WTC11 (cell line): ENCODE measurements at regions of chr18 and their contacts with region 1.

Region 1: GRCh38 chr18:961644-962355 is 57.1 kb downstream of the ADCYAP1 start:
- DNase-seq: peak; percentile 66
- ATAC-seq: peak; percentile 62
- H3K4me3 Mint-ChIP-seq: peak overlapping the region; percentile 46
- H3K27ac Mint-ChIP-seq: no peak overlapping the region
- H3K4me1 Mint-ChIP-seq: peaks cover 5% of the 10 kb centered on the region
- H3K27me3 Mint-ChIP-seq: no peaks in the 10 kb centered on the region; the same call in 1 of the 2 replicates
- CTCF ChIP-seq: peak; percentile 94

Region 2: DNA sequence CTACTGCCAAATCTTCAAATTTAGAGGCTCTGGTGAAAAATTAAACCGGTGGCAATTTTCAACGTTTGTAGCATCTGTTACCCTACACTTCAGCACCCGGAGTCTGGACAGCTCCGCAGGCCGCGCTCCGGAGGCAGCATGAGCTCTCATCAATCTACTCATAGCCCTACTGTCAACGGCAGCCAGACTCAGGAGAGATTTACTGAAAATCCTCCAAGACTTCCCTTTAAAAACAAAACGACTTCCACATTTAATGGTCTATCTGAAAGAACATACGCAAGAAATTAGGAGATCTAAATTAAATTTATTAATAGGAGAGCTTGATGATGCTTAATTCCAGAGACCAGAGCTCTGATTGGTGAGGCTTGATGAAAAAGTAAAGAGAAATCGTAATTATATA is 58.1 kb before region 1 on chr18:
- CTCF ChIA-PET with region 1: interaction called, 26 read pairs
- POLR2A ChIA-PET with region 1: no interaction called
- DNase-seq: peak; percentile 83
- ATAC-seq: no peak
- H3K4me3 Mint-ChIP-seq: peak overlapping the region; percentile 76
- H3K27ac Mint-ChIP-seq: no peak overlapping the region
- H3K4me1 Mint-ChIP-seq: peaks cover 50% of the 10 kb centered on the region
- H3K27me3 Mint-ChIP-seq: peaks cover 89% of the 10 kb centered on the region
- CTCF ChIP-seq: no peak

Region 3: DNA sequence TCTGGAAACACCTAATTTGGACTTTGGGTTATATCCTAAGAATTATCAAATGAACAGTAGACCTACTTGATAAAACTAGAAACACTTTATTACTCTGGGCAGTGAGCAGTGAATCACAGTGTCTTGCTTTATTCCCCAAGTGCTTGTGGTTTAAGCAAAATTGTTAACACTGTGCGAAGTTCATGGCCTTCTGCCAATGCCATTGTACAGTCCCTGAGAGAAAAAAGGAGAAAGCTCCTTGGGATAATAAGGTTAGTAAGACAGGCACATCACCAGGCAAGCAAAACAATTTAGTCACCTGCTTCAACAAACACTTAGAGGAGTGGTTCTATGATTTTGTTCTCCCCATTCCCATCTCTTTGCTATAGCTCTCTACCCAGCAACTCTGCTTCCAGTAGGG is 17.4 kb before region 1 on chr18:
- CTCF ChIA-PET with region 1: interaction called, 17 read pairs
- POLR2A ChIA-PET with region 1: no interaction called
- DNase-seq: no peak
- ATAC-seq: no peak
- H3K4me3 Mint-ChIP-seq: no peak overlapping the region
- H3K27ac Mint-ChIP-seq: no peak overlapping the region
- H3K4me1 Mint-ChIP-seq: peaks cover 2% of the 10 kb centered on the region
- H3K27me3 Mint-ChIP-seq: no peaks in the 10 kb centered on the region; the same call in 1 of the 2 replicates
- CTCF ChIP-seq: no peak

Region 4: GRCh38 chr18:950882-951539 is 10.8 kb before region 1 on chr18:
- CTCF ChIA-PET with region 1: interaction called, 17 read pairs
- POLR2A ChIA-PET with region 1: no interaction called
- DNase-seq: no peak
- ATAC-seq: no peak
- H3K4me3 Mint-ChIP-seq: no peak overlapping the region
- H3K27ac Mint-ChIP-seq: no peak overlapping the region
- H3K4me1 Mint-ChIP-seq: peaks cover 8% of the 10 kb centered on the region
- H3K27me3 Mint-ChIP-seq: no peaks in the 10 kb centered on the region; the same call in 1 of the 2 replicates
- CTCF ChIP-seq: no peak

Region 5: DNA sequence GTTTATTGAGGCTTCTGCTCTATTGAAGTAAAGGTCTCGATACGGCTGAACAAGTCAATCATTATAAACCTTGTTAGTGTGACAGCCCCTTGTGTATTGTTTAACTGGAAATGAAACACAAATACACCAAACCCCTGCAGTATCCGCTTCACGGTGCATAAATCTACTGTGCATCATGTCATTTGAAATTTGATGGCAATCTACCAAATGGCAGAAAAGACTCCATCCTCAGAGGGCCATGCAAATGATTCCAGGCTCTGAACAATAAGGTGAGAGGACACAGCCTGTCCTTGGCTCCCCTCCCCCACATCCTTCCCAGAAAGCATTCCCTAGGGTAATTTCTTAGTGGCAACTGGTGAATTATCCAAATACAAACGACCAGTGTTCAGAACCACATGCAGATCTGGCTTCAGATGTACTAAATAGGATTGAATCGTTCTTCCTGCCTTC is 23.4 kb after region 1 on chr18:
- CTCF ChIA-PET with region 1: interaction called, 14 read pairs
- POLR2A ChIA-PET with region 1: no interaction called
- DNase-seq: peak; percentile 21
- ATAC-seq: peak; percentile 59
- H3K4me3 Mint-ChIP-seq: peak overlapping the region; percentile 31; the same call in 1 of the 2 replicates
- H3K27ac Mint-ChIP-seq: peak overlapping the region; percentile 54; the same call in 1 of the 2 replicates
- H3K4me1 Mint-ChIP-seq: peaks cover 17% of the 10 kb centered on the region; the same call in 1 of the 2 replicates
- H3K27me3 Mint-ChIP-seq: no peaks in the 10 kb centered on the region
- CTCF ChIP-seq: no peak

Region 6: GRCh38 chr18:1062588-1062987 is 100.8 kb after region 1 on chr18:
- CTCF ChIA-PET with region 1: interaction called, 12 read pairs
- POLR2A ChIA-PET with region 1: no interaction called
- DNase-seq: peak; percentile 46
- ATAC-seq: peak; percentile 96
- H3K4me3 Mint-ChIP-seq: no peak overlapping the region
- H3K27ac Mint-ChIP-seq: no peak overlapping the region
- H3K4me1 Mint-ChIP-seq: no peaks in the 10 kb centered on the region
- H3K27me3 Mint-ChIP-seq: no peaks in the 10 kb centered on the region
- CTCF ChIP-seq: no peak

Region 7: GRCh38 chr18:1092228-1092627 is 130.4 kb after region 1 on chr18:
- CTCF ChIA-PET with region 1: interaction called, 10 read pairs
- POLR2A ChIA-PET with region 1: no interaction called
- DNase-seq: peak; percentile 33
- ATAC-seq: peak; percentile 75
- H3K4me3 Mint-ChIP-seq: no peak overlapping the region
- H3K27ac Mint-ChIP-seq: no peak overlapping the region
- H3K4me1 Mint-ChIP-seq: peaks cover 42% of the 10 kb centered on the region
- H3K27me3 Mint-ChIP-seq: peaks cover 22% of the 10 kb centered on the region
- CTCF ChIP-seq: no peak